Prostate gland (tissue), 2 donors: ENCODE measurements at regions of chr19 and their contacts with region 1.

Region 1: GRCh38 chr19:572140-572742 is at the start of gene BSG:
- DNase-seq: peak; percentile 98
- H3K4me3 ChIP-seq: peak within 1 kb of the TSS; percentile 97 to 99
- H3K27ac ChIP-seq: peak within 1 kb of the TSS; percentile 85 to 87
- H3K4me1 ChIP-seq: peaks cover 18% of the 10 kb centered on the region
- H3K27me3 ChIP-seq: no peaks in the 10 kb centered on the region
- CTCF ChIP-seq: peak in 2 of 4 experiments; percentile 21 to 38
- POLR2A ChIP-seq: peak; percentile 93
- total RNA-seq, gene BSG: 557 to 1,261 TPM

Region 2: GRCh38 chr19:511101-511851 is 61.0 kb before region 1 on chr19:
- intact Hi-C with region 1: no loop called
- DNase-seq: no peak
- H3K4me3 ChIP-seq: no peak overlapping the region
- H3K27ac ChIP-seq: no peak overlapping the region
- H3K4me1 ChIP-seq: peaks cover 5% of the 10 kb centered on the region
- H3K27me3 ChIP-seq: no peaks in the 10 kb centered on the region
- CTCF ChIP-seq: no peak
- POLR2A ChIP-seq: no peak

Region 3: DNA sequence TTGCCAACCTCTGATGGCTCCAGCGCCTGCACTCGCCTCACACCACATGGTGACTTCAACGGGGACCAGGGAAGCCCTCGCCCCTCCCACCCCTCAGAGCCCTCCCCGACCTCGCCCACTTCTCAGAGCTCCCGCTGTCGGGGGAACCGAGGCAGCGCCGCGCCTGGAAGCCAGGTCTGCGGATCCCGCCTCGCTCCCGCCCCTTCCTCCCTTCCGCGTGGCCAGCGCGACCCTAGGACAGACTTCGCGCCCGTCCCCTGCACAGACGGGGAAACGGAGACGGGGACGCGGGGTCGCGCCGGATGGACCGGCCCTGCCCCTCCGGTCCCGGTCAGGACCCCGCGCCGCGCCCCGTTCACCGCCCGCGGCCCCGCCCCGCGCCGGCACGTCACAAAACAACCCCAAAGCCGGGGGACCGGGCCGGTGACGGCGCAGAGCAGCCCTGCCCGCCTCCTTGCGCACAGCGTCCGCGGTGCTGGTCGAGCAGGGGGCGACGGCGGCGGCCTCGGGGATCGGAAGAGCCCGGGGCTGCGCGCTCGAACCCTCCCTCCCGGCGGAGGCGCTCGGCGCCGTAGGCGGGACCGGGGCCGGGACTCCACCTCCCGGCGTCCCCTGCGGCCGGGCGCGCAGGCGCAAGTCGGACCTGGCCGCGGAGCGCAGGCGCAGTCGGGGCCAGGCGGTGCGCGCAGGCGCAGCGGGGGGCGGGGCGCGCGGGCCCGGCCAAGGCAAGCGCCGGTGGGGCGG is 41.1 kb before region 1 on chr19:
- intact Hi-C with region 1: loop called (anchors 5 kb)
- DNase-seq: peak; percentile 70
- H3K4me3 ChIP-seq: peak overlapping the region; percentile 82 to 98
- H3K27ac ChIP-seq: peak overlapping the region; percentile 91 to 96
- H3K4me1 ChIP-seq: peaks cover 9% of the 10 kb centered on the region
- H3K27me3 ChIP-seq: no peaks in the 10 kb centered on the region
- CTCF ChIP-seq: peak in 2 of 4 experiments; percentile 28 to 37
- POLR2A ChIP-seq: peak; percentile 57

Region 4: DNA sequence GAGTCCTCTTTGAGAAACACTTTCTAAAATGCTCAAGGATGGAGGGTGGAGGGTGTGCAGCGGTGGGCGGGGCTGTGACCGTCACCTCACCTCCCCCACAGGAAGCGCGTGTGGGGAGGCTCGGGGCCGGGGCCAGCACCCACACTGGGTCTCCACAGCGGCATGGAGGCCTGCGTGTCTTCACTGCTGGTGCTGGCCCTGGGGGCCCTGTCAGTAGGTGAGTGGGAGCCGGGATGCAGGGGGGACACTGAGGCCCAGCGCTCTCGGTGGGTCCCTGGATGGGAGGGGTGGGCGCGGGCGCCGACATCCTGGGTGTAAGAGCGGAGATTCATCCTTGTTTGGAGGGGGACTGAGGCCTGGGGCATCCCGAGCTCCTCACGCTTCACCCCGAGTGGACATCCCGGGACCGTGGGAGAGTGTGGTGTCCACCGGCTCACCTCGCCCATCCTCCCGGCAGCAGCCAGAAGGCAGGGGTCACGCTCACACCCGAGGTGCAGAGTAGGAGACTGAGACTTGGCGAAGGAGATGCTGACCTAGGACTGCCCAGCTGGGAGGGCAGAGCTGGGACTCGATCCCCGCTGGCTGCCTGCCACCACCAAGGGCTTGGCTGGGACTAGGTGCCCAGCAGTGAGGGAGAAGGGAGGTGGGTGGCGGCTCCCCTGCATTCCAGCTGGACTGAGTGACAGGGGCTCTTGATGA is 28.2 kb before region 1 on chr19 and contains the start of gene GZMM:
- intact Hi-C with region 1: no loop called
- DNase-seq: no peak
- H3K4me3 ChIP-seq: no peak within 1 kb of the TSS
- H3K27ac ChIP-seq: no peak within 1 kb of the TSS
- H3K4me1 ChIP-seq: no peaks in the 10 kb centered on the region
- H3K27me3 ChIP-seq: no peaks in the 10 kb centered on the region
- CTCF ChIP-seq: no peak
- POLR2A ChIP-seq: no peak
- total RNA-seq, gene GZMM: 0.68 TPM in 1 of 2 donors, not detected in the other